ENCODE measurements at regions of chr9 and their contacts with region 1.

Region 1: GRCh38 chr9:75265525-75265972 is 177.2 kb downstream of the OSTF1 start:
- DNase-seq: no peak

Region 2: DNA sequence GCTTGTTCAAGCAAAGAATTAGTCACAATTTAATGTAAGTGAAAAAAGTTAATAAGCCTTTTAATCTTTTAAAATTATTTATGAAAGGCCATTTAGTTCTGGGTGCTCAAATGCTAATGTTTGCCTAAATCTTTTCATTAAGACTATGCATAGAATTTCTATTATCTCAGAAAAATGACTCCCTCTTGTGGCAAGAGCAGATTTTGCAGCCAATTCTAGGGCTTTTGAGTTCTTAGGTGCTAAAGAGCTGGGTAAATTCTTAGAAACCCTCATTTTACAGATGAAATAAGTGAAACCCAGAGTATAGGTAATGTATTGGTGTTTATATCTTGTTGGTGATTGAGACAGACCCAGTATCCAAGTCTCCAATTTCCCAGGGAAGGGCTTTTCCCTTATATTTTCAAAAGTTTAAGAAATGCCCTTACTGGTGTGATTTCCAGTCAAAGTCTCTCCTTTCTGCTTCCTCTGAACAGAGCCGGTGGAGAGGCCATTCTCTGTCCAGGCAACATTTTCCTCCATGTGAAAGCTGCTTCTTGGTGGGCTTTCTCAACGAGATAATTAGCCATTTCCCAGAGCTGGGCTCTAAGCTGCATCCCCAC is 600.8 kb after region 1 on chr9:
- intact Hi-C with region 1: loop called in 1 of 2 experiments (anchors 10 kb)
- DNase-seq: no peak